ENCODE measurements at regions of chr11 and their contacts with region 1.

Region 1: GRCh38 chr11:21825127-21825526 is 367.8 kb upstream of the ANO5 start:
- DNase-seq: no peak
- H3K4me3 Mint-ChIP-seq: no peak overlapping the region
- H3K27ac Mint-ChIP-seq: no peak overlapping the region
- H3K4me1 Mint-ChIP-seq: no peaks in the 10 kb centered on the region
- H3K27me3 Mint-ChIP-seq: no peaks in the 10 kb centered on the region

Region 2: DNA sequence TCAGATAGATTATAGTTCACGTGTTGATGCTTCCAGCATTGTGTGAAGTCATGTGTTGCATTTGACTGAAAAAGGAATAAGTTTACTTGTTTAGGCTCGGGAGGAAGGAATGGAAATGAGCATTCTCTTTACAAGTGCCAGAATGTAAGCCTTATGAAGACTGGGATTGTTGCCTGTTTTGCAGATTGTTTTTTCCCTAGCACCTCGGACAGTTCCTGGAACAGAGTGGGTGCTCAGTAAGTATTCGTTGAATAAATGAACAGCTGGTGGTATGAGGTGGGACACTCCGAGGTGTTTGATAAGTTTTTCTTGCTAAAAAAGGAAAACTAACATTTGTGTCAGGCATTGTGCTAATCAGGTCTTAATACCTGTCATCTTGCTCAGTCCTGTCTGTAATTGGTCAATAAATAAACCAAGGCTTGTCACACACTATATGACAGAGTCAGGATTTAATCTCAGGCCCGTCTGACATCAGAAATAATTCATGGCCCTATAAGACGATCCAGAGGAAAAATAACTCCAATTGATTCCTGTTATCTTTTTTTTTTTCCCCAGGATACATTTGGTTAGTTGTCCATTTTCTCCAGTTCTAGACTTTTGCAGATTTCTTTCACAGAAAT is 851.1 kb before region 1 on chr11:
- intact Hi-C with region 1: no loop called
- DNase-seq: no peak
- H3K4me3 Mint-ChIP-seq: no peak overlapping the region
- H3K27ac Mint-ChIP-seq: no peak overlapping the region
- H3K4me1 Mint-ChIP-seq: no peaks in the 10 kb centered on the region
- H3K27me3 Mint-ChIP-seq: no peaks in the 10 kb centered on the region

Region 3: GRCh38 chr11:21806947-21807346 is 18.2 kb before region 1 on chr11:
- intact Hi-C with region 1: loop called (anchors 2 kb)
- DNase-seq: no peak
- H3K4me3 Mint-ChIP-seq: no peak overlapping the region
- H3K27ac Mint-ChIP-seq: no peak overlapping the region
- H3K4me1 Mint-ChIP-seq: no peaks in the 10 kb centered on the region
- H3K27me3 Mint-ChIP-seq: no peaks in the 10 kb centered on the region